Breast epithelium (tissue), 4 donors: ENCODE measurements at regions of chr6 and their contacts with region 1.

Region 1: DNA sequence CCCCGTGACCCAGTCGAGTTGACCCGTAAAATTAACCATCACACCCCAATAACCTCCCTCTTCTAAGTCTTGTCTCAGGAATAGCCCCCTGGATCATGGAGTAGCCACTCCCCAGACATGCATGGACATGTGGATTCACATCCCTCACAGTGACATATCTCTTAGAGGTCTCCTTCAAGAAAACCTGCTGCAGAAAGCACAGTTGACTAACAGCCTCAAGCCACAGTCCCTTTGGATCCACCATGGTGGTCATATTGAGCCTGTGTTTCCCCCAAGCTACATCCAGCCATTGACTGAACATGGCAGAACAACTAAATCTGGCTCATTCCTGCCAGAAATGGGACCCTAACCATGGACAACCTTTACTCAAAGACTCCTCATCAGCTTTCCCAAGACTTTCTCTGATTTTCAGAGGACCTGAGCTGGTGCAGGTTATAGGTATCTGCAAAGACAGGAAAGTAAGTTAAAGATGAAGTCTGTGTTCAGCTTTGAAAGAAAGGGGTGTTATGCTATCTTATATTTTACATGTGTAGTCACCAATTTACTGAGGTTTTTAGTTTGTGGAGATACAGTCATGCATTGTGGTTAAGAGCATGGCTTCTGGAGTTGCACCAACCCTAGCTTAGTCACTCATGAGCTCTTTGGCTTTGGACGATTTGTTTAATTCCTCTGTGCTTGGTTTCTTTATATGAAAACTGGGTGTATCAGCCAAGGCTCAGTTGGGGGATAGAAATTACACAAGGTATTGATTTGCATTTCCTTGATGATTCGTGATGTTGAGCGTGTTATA is 219.1 kb downstream of the MYLK4 start:
- DNase-seq: no peak
- H3K4me3 ChIP-seq: no peak overlapping the region
- H3K27ac ChIP-seq: no peak overlapping the region
- H3K4me1 ChIP-seq: no peaks in the 10 kb centered on the region
- H3K27me3 ChIP-seq: no peaks in the 10 kb centered on the region
- CTCF ChIP-seq: no peak
- POLR2A ChIP-seq: no peak

Region 2: GRCh38 chr6:1670702-1671462 is 860.7 kb before region 1 on chr6:
- intact Hi-C with region 1: loop called (anchors 5 kb)
- DNase-seq: peak in 1 of 2 donors; percentile 45
- H3K4me3 ChIP-seq: no peak overlapping the region
- H3K27ac ChIP-seq: peak overlapping the region; percentile 19 to 50
- H3K4me1 ChIP-seq: no peaks in the 10 kb centered on the region
- H3K27me3 ChIP-seq: no peaks in the 10 kb centered on the region
- CTCF ChIP-seq: no peak
- POLR2A ChIP-seq: no peak